Gastrocnemius medialis (tissue), 4 donors: ENCODE measurements at regions of chr6 and their contacts with region 1.

Region 1: GRCh38 chr6:122050242-122050755 is 349.2 kb upstream of the HSF2 start:
- DNase-seq: no peak
- ATAC-seq: no peak
- H3K4me3 ChIP-seq: no peak overlapping the region
- H3K27ac ChIP-seq: no peak overlapping the region
- H3K4me1 ChIP-seq: peaks cover 0 to 3% of the 10 kb centered on the region in 2 donors
- H3K27me3 ChIP-seq: no peaks in the 10 kb centered on the region
- CTCF ChIP-seq: no peak
- POLR2A ChIP-seq: no peak

Region 2: DNA sequence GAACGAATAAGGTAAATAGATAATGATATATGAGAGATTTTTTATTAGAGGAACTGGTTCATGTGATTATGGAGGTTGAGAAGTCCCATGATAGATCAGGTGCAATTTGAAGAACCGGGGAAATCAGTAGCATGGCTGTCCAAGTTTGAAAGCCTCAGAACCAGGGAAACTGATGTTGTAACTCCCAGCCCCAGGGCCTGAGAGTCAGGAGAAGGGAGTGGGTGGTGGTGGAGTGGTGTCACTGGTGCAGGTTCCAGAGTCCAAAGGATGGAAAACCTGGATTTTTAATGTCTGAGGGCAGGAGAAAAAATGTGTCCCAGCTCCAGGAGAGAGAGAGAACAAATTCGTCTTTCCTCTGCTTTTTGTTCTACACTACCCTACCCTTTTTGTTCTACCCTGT is 72.7 kb before region 1 on chr6:
- in situ Hi-C with region 1: no loop called
- intact Hi-C with region 1: no loop called
- DNase-seq: no peak
- ATAC-seq: no peak
- H3K4me3 ChIP-seq: no peak overlapping the region
- H3K27ac ChIP-seq: no peak overlapping the region
- H3K4me1 ChIP-seq: no peaks in the 10 kb centered on the region
- H3K27me3 ChIP-seq: no peaks in the 10 kb centered on the region
- CTCF ChIP-seq: no peak
- POLR2A ChIP-seq: no peak

Region 3: DNA sequence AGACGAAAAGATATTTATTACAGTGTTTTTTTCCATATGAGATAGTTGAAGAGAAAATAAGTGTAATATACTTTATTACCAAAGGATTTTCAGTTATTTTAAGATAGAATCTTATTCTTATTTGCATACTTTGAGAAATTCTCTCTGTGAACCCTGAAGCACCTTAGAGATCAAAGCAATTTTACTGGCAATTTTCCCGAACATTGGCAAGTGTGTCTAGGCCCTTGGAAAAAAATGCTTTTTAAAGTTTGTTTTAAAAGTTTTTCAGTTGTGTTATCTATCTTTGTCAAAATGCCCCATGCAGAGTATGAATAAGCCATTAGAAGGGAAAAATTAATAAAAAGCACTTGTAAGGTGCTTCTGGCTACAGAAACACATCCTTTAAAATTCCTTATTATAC is 72.4 kb after region 1 on chr6:
- in situ Hi-C with region 1: no loop called
- intact Hi-C with region 1: loop called (anchors 5 kb)
- DNase-seq: no peak
- ATAC-seq: no peak
- H3K4me3 ChIP-seq: no peak overlapping the region
- H3K27ac ChIP-seq: no peak overlapping the region
- H3K4me1 ChIP-seq: peaks cover 17 to 18% of the 10 kb centered on the region in 2 donors
- H3K27me3 ChIP-seq: no peaks in the 10 kb centered on the region
- CTCF ChIP-seq: no peak
- POLR2A ChIP-seq: no peak